Activated CD4-positive, alpha-beta T cell treated with anti-CD3 and anti-CD28 coated beads, Interleukin-2, amount 10 ng/mL, durations not matched to agents 24 days and 14 days (primary cell): ENCODE measurements at regions of chr3 and their contacts with region 1.

Region 1: DNA sequence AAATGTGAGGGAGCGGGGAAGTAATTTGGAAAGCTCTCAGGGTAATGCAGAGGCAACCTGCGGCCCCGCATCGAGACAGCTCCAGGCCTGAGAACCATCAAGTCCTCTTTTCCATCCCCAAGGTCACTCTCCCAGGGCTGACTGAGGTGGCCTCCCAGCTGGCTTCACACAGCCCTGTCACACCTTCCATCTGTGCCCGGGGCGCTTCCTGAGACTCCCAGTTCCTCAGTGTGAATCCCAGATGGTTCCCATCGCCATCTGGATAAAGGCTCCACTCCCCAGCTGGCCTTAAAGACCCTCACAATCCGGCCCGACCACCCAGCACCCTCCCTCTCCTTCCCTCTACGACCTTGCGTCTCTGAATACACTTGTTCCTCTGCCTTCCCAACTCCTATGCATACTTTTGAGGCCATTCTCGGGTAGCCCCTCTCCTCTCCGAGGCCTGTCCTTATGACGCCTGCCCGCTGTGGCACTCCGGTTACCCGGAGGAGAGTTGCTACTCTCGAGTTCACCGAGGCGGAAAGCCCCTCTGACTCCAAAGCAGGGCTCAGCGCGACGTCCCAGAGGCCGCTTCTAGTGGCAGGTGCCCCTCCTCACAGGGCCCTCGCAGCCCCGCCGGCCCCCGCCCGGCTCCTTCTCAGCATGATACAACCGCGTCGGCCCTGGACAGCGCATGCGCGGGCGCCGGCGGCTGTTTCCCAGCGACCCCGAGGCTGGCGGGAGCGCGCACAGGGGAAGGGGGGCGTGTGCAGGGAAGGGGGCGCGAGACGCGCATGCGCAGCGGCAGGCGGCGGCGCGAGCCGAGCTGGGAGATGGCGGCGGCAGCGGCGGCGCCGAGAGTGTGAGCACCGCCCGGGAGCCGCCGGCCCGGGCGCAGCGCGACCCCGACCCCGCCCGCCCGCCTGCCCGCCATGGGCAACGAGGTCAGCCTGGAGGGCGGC is at the start of gene BSN:
- DNase-seq: peak; percentile 96
- H3K4me3 Mint-ChIP-seq: peak within 1 kb of the TSS; percentile 90
- H3K27ac Mint-ChIP-seq: peak within 1 kb of the TSS; percentile 66
- H3K4me1 Mint-ChIP-seq: peaks cover 19% of the 10 kb centered on the region
- H3K27me3 Mint-ChIP-seq: peaks cover 56% of the 10 kb centered on the region
- total RNA-seq, gene BSN: 0.09 TPM in 2 replicates

Region 2: DNA sequence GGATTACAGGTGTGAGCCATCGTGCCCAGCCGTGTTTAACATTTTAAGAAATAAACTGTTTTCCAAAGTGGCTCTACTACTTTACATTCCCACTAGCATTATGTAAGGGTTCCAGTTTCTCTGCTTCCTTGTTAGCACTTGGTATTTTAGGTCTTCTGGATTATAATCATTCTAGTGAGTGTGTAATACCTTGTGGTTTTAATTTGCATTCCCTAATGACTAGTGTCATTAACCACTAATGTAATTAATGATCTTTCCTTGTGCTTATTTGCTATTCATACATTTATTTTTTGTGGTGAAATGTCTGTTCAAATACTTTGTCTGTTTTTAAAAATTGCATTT is 604.6 kb before region 1 on chr3:
- intact Hi-C with region 1: no loop called
- DNase-seq: no peak
- H3K4me3 Mint-ChIP-seq: no peak overlapping the region
- H3K27ac Mint-ChIP-seq: no peak overlapping the region
- H3K4me1 Mint-ChIP-seq: peaks cover 33% of the 10 kb centered on the region
- H3K27me3 Mint-ChIP-seq: no peaks in the 10 kb centered on the region

Region 3: GRCh38 chr3:49422379-49423248 is 131.3 kb before region 1 on chr3 and contains the start of gene AMT:
- intact Hi-C with region 1: no loop called
- DNase-seq: no peak
- H3K4me3 Mint-ChIP-seq: no peak within 1 kb of the TSS
- H3K27ac Mint-ChIP-seq: peak within 1 kb of the TSS; percentile 48
- H3K4me1 Mint-ChIP-seq: peaks cover 29% of the 10 kb centered on the region
- H3K27me3 Mint-ChIP-seq: no peaks in the 10 kb centered on the region
- total RNA-seq, gene AMT: 2.6 and 3.7 TPM in 2 replicates

Region 4: DNA sequence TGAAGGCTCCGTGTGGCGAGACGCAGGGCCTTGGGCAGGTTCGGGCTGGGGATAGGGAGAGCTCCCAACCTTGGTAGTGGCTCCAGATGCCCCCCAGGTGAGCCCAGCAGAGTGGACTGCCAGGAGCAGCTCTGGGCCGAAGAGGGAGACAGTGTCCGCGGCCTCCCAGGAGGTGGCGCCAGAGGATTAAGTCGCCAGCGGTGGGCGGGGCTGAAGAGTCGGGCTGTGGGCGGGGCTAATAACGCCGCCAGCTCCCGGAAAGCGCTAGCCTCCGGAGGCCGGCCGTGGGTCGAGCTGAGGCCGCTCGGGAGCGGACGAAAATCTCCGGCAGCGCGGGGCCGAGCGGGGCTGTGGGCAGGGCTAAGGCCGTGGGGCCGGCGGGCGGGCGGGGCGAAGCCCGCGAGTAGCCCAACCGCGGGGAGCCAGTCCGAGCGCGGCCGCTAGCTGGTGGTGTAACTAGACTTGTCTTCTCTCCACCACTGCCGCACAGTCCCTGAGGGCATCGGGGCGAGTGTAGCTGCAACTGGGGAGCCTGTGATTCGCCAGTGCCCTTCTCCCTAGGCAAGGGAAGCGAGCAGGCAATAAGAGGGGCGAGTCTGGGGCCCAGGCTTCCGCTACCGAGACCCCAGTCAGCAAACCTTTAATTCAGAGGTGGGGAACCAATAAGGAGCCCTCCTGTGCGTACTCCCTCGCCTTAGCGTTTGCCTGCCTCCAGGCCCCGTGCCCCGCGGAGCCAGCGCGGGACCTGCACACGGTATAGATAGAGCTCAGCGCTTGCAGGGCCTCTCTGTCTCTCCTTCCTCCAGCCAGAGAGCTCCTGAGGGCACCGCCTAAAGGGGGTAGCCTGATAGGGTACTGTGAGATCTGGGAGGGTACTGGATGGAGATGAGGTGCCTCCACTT is 14.1 kb before region 1 on chr3:
- intact Hi-C with region 1: loop called (anchors 1 kb)
- DNase-seq: peak; percentile 98
- H3K4me3 Mint-ChIP-seq: peak overlapping the region; percentile 73
- H3K27ac Mint-ChIP-seq: peak overlapping the region; percentile 25
- H3K4me1 Mint-ChIP-seq: peaks cover 5% of the 10 kb centered on the region
- H3K27me3 Mint-ChIP-seq: peaks cover 17% of the 10 kb centered on the region